ENCODE measurements at regions of chr13 and their contacts with region 1.

Region 1: DNA sequence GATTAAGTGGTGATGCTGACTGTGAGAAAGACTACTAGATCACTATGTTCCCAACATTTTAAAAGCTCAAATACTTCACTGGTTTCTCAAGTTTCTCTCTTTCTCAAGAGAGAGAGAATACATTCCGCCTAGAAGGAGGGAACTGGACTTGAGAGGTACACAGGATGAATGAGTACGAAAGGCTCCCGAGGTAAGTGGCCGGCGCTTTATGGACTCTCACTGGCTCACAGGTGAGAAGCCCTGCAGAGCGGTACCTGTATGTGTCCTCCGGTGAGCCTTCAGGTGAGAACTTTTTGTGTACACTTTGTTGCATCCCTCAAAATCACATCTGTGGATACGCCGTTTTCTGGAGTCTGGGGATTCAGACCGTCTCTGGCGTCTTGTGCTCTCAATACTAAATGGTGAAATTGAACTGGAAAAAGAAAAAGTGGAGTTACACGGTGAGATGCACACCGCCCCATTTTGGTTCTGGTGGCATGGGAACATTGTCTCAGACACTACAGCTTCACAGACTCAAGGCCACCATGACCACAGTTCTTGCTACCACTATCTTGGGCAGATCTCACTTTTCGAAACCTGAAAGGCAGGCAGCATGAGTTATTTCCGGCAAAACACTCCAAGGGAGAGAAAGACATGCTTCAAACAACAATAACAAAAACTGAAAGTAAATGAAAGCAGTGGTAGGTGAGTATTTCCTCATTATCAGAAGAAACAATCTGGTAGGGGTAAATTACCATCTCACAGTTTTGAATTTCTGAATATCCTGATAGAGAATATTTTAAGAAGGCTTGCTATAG is 418.9 kb downstream of the KLF12 start:
- DNase-seq: peak; percentile 71 to 91 (median 79)
- H3K4me3 ChIP-seq: peak overlapping the region in 1 of 2 donors; percentile 6
- H3K4me3 Mint-ChIP-seq: peak overlapping the region; percentile 58 to 88 (median 78)
- H3K27ac ChIP-seq: peak overlapping the region; percentile 41
- H3K27ac Mint-ChIP-seq: peak overlapping the region; percentile 84 to 98 (median 94)
- H3K4me1 ChIP-seq: peaks cover 52% of the 10 kb centered on the region
- H3K4me1 Mint-ChIP-seq: peaks cover 48 to 70% (median 64%) of the 10 kb centered on the region in 4 donors
- H3K27me3 ChIP-seq: no peaks in the 10 kb centered on the region
- H3K27me3 Mint-ChIP-seq: no peaks in the 10 kb centered on the region

Region 2: GRCh38 chr13:72781451-72782439 is 933.6 kb before region 1 on chr13 and contains the starts of genes DIS3 and PIBF1:
- CTCF ChIA-PET with region 1: no interaction called
- POLR2A ChIA-PET with region 1: no interaction called
- intact Hi-C with region 1: loop called (anchors 2 kb)
- DNase-seq: peak; percentile 94 to 98 (median 95)
- H3K4me3 ChIP-seq: peak within 1 kb of the TSS; percentile 92 to 96
- H3K4me3 Mint-ChIP-seq: peak within 1 kb of the TSS; percentile 99 to 100 (median 100)
- H3K27ac ChIP-seq: peak within 1 kb of the TSS; percentile 84
- H3K27ac Mint-ChIP-seq: peak within 1 kb of the TSS; percentile 90 to 100 (median 99)
- H3K4me1 ChIP-seq: peaks cover 73% of the 10 kb centered on the region
- H3K4me1 Mint-ChIP-seq: peaks cover 39 to 86% (median 65%) of the 10 kb centered on the region in 4 donors
- H3K27me3 ChIP-seq: no peaks in the 10 kb centered on the region
- H3K27me3 Mint-ChIP-seq: no peaks in the 10 kb centered on the region
- total RNA-seq, gene DIS3: 36.4 to 41.0 TPM
- total RNA-seq, gene PIBF1: 27.9 to 36.0 TPM

Region 3: GRCh38 chr13:73058736-73059459 is 656.4 kb before region 1 on chr13 and contains the start of gene KLF5:
- CTCF ChIA-PET with region 1: interaction called, 14 read pairs
- POLR2A ChIA-PET with region 1: interaction called, 13 read pairs
- intact Hi-C with region 1: loop called (anchors 1 kb)
- DNase-seq: peak; percentile 93 to 97 (median 94)
- H3K4me3 ChIP-seq: peak within 1 kb of the TSS; percentile 52 to 60
- H3K4me3 Mint-ChIP-seq: peak within 1 kb of the TSS; percentile 87 to 95 (median 92)
- H3K27ac ChIP-seq: no peak within 1 kb of the TSS
- H3K27ac Mint-ChIP-seq: peak within 1 kb of the TSS; percentile 72 to 94 (median 84)
- H3K4me1 ChIP-seq: peaks cover 19% of the 10 kb centered on the region
- H3K4me1 Mint-ChIP-seq: peaks cover 14 to 30% (median 18%) of the 10 kb centered on the region in 4 donors
- H3K27me3 ChIP-seq: peaks cover 11% of the 10 kb centered on the region
- H3K27me3 Mint-ChIP-seq: peaks cover 10 to 13% of the 10 kb centered on the region in 2 donors
- total RNA-seq, gene KLF5: 5.0 to 5.4 TPM

Region 4: GRCh38 chr13:73702419-73703071 is 12.8 kb before region 1 on chr13:
- CTCF ChIA-PET with region 1: interaction called, 9 read pairs
- POLR2A ChIA-PET with region 1: interaction called, 22 read pairs
- intact Hi-C with region 1: loop called (anchors 1 kb)
- DNase-seq: peak; percentile 52 to 84 (median 74)
- H3K4me3 ChIP-seq: no peak overlapping the region
- H3K4me3 Mint-ChIP-seq: peak overlapping the region; percentile 67 to 88 (median 80)
- H3K27ac ChIP-seq: peak overlapping the region; percentile 29
- H3K27ac Mint-ChIP-seq: peak overlapping the region; percentile 89 to 98 (median 95)
- H3K4me1 ChIP-seq: peaks cover 46% of the 10 kb centered on the region
- H3K4me1 Mint-ChIP-seq: peaks cover 31 to 62% (median 33%) of the 10 kb centered on the region in 4 donors
- H3K27me3 ChIP-seq: no peaks in the 10 kb centered on the region
- H3K27me3 Mint-ChIP-seq: no peaks in the 10 kb centered on the region

Region 5: GRCh38 chr13:73731564-73731963 is 16.3 kb after region 1 on chr13:
- CTCF ChIA-PET with region 1: interaction called, 13 read pairs
- POLR2A ChIA-PET with region 1: interaction called, 13 read pairs
- intact Hi-C with region 1: no loop called
- DNase-seq: no peak
- H3K4me3 ChIP-seq: no peak overlapping the region
- H3K4me3 Mint-ChIP-seq: no peak overlapping the region
- H3K27ac ChIP-seq: no peak overlapping the region
- H3K27ac Mint-ChIP-seq: peak overlapping the region in 4 of 7 donors; percentile 23 to 86 (median 58)
- H3K4me1 ChIP-seq: no peaks in the 10 kb centered on the region
- H3K4me1 Mint-ChIP-seq: peaks cover 34 to 44% (median 42%) of the 10 kb centered on the region in 4 donors
- H3K27me3 ChIP-seq: no peaks in the 10 kb centered on the region
- H3K27me3 Mint-ChIP-seq: no peaks in the 10 kb centered on the region

Region 6: DNA sequence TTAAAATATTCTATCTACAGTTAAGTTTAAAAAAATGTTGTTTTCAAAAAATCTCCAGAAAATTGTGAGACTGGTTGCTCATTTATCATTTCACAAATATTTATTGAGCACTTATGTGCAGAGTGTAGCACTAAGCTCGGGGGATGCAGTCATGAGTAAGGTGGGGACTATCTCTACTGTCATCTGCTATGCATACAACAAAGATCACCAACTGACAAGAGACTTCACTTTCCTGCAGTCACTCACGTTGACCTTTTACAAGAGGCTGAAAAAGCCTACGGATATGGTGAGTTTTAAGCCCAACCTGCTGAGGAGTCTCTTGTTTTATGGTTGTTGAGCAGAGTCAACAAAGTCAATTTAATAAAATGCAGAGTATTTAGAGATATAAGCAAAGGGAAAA is 26.4 kb after region 1 on chr13:
- CTCF ChIA-PET with region 1: no interaction called
- POLR2A ChIA-PET with region 1: no interaction called
- intact Hi-C with region 1: no loop called
- DNase-seq: no peak
- H3K4me3 ChIP-seq: no peak overlapping the region
- H3K4me3 Mint-ChIP-seq: peak overlapping the region in 2 of 8 donors; percentile 8 to 30
- H3K27ac ChIP-seq: no peak overlapping the region
- H3K27ac Mint-ChIP-seq: peak overlapping the region; percentile 1 to 84 (median 36)
- H3K4me1 ChIP-seq: peaks cover 18% of the 10 kb centered on the region
- H3K4me1 Mint-ChIP-seq: peaks cover 27 to 55% (median 43%) of the 10 kb centered on the region in 4 donors
- H3K27me3 ChIP-seq: no peaks in the 10 kb centered on the region
- H3K27me3 Mint-ChIP-seq: no peaks in the 10 kb centered on the region

Measured in CD4-positive, alpha-beta memory T cell (primary cell).